Dendritic cell treated with granulocyte-macrophage colony-stimulating factor and Interleukin-4, amounts not matched to agents 40 ng/mL and 50 ng/mL, for 4 days (primary cell): ENCODE measurements at regions of chr2 and their contacts with region 1.

Region 1: GRCh38 chr2:131492418-131493198 is 411 bp upstream of the MZT2A start:
- H3K4me3 Mint-ChIP-seq: peak overlapping the region; percentile 98
- H3K27ac Mint-ChIP-seq: peak overlapping the region; percentile 96
- H3K4me1 Mint-ChIP-seq: peaks cover 41% of the 10 kb centered on the region
- H3K27me3 Mint-ChIP-seq: no peaks in the 10 kb centered on the region

Region 2: DNA sequence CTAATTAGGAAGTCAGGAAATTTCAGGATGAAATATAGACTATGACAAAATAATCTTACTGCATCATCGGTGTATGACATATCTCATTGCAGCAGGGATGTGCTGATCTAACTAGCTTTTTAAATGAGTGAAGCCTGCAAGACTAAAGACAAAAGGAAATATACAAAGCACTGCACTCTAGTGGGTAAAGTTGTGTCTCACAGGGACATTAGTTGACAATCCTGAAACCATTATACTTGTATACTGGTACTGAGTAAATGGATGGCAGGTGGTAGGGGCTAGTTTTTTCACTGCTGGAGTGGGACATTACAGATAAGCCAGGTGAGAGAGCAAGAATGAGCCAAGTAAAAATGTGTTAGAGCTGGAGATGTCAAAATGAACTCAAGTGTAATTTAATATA is 1830.7 kb before region 1 on chr2:
- intact Hi-C with region 1: no loop called
- H3K4me3 Mint-ChIP-seq: no peak overlapping the region
- H3K27ac Mint-ChIP-seq: no peak overlapping the region
- H3K4me1 Mint-ChIP-seq: no peaks in the 10 kb centered on the region
- H3K27me3 Mint-ChIP-seq: no peaks in the 10 kb centered on the region

Region 3: GRCh38 chr2:131105156-131105949 is 387.3 kb before region 1 on chr2 and contains the start of gene PLEKHB2:
- intact Hi-C with region 1: loop called (anchors 2 kb)
- H3K4me3 Mint-ChIP-seq: peak within 1 kb of the TSS; percentile 99
- H3K27ac Mint-ChIP-seq: peak within 1 kb of the TSS; percentile 99
- H3K4me1 Mint-ChIP-seq: peaks cover 45% of the 10 kb centered on the region
- H3K27me3 Mint-ChIP-seq: no peaks in the 10 kb centered on the region

Region 4: GRCh38 chr2:131682122-131682944 is 189.7 kb after region 1 on chr2:
- intact Hi-C with region 1: loop called (anchors 10 kb)
- H3K4me3 Mint-ChIP-seq: peak overlapping the region; percentile 76
- H3K27ac Mint-ChIP-seq: peak overlapping the region; percentile 81
- H3K4me1 Mint-ChIP-seq: peaks cover 25% of the 10 kb centered on the region
- H3K27me3 Mint-ChIP-seq: peaks cover 52% of the 10 kb centered on the region